Naive thymus-derived CD4-positive, alpha-beta T cell (primary cell): ENCODE measurements at regions of chr15 and their contacts with region 1.

Region 1: DNA sequence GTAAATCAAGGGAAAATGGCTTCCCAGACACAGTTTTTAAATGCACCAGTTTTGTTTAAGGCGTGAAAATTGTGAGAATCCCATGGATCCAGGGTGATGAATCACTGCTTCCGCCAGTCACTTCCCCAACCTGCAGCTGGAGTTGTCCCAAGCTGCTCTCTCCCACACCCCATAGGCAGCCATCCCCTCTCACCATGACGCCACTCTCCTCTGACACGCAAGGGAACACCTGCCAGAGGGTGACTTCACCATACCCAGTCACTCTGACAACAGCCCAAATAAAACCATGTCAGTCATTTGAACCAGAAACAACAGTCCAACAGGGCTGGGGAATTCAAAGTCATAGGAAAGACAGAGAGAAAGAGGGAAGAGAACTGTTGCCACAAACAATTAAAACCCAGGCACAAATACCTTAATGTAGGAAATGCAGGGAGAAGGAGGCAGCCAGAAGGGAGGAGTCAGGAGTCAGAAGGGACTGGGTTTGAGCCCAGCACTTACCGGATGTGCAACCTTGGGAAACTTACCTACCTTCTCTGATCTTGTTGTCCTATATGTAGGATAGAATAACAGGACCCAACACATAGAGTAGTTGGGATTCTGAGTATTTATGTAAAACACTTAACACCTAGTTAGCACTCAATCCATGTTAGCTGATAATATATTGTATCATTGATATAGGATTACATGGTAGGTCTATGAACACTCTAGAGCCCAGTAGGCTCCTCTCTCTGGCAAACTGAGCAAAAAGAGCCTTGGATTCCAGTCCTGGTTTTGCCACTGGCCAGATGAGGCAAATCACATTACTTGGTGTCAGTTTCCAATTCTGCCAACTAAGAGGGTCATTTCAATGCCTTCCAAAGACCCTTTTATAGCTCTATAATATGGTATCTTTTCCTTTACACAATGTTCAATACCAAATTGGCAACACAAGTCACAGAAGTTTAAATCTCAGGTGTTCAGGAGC is 326.3 kb upstream of the ICE2 start:
- DNase-seq: no peak
- ATAC-seq: no peak
- H3K4me3 ChIP-seq: no peak overlapping the region
- H3K4me3 Mint-ChIP-seq: peak overlapping the region in 1 of 10 donors; percentile 61
- H3K27ac ChIP-seq: no peak overlapping the region
- H3K27ac Mint-ChIP-seq: peak overlapping the region in 7 of 9 donors; percentile 32 to 85 (median 62)
- H3K4me1 ChIP-seq: peaks cover 27 to 34% of the 10 kb centered on the region in 2 donors
- H3K4me1 Mint-ChIP-seq: peaks cover 27 to 77% (median 64%) of the 10 kb centered on the region in 7 donors
- H3K27me3 ChIP-seq: no peaks in the 10 kb centered on the region
- H3K27me3 Mint-ChIP-seq: peaks cover 0 to 2% (median 0%) of the 10 kb centered on the region in 5 donors

Region 2: DNA sequence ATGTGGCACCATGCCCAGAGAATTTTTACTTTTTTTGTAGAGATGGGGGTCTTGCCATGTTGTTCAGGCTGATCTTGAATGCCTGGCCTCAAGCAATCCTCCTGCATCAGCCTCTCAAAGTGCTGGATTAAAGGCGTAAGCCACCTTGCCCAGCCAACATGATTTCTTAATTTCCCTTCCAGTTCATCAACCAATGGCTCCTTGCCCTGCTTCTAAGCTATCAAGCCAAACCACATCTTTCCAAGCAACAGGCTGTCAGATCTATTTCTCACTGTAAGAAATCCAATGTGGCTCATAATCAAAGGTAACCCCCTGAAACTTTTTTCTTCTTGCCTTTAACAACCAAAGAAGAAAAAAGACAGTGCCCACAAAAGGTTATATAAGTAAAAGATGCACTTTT is 122.1 kb before region 1 on chr15:
- CTCF ChIA-PET with region 1: no interaction called
- POLR2A ChIA-PET with region 1: no interaction called
- intact Hi-C with region 1: no loop called
- DNase-seq: no peak
- ATAC-seq: no peak
- H3K4me3 ChIP-seq: no peak overlapping the region
- H3K4me3 Mint-ChIP-seq: no peak overlapping the region
- H3K27ac ChIP-seq: no peak overlapping the region
- H3K27ac Mint-ChIP-seq: no peak overlapping the region
- H3K4me1 ChIP-seq: no peaks in the 10 kb centered on the region
- H3K4me1 Mint-ChIP-seq: no peaks in the 10 kb centered on the region
- H3K27me3 ChIP-seq: no peaks in the 10 kb centered on the region
- H3K27me3 Mint-ChIP-seq: no peaks in the 10 kb centered on the region

Region 3: GRCh38 chr15:60899322-60899966 is 94.2 kb after region 1 on chr15:
- CTCF ChIA-PET with region 1: no interaction called
- POLR2A ChIA-PET with region 1: no interaction called
- intact Hi-C with region 1: loop called in 1 of 2 experiments (anchors 5 kb)
- DNase-seq: peak in 2 of 9 donors; percentile 1 to 36
- ATAC-seq: peak; percentile 81
- H3K4me3 ChIP-seq: no peak overlapping the region
- H3K4me3 Mint-ChIP-seq: peak overlapping the region in 1 of 10 donors; percentile 63
- H3K27ac ChIP-seq: no peak overlapping the region
- H3K27ac Mint-ChIP-seq: peak overlapping the region in 1 of 9 donors; percentile 59
- H3K4me1 ChIP-seq: no peaks in the 10 kb centered on the region
- H3K4me1 Mint-ChIP-seq: peaks cover 0 to 50% (median 0%) of the 10 kb centered on the region in 7 donors
- H3K27me3 ChIP-seq: no peaks in the 10 kb centered on the region
- H3K27me3 Mint-ChIP-seq: peaks cover 0 to 11% (median 0%) of the 10 kb centered on the region in 5 donors

Region 4: GRCh38 chr15:61175024-61175423 is 369.8 kb after region 1 on chr15:
- CTCF ChIA-PET with region 1: no interaction called
- POLR2A ChIA-PET with region 1: no interaction called
- intact Hi-C with region 1: no loop called
- DNase-seq: no peak
- ATAC-seq: no peak
- H3K4me3 ChIP-seq: no peak overlapping the region
- H3K4me3 Mint-ChIP-seq: no peak overlapping the region
- H3K27ac ChIP-seq: no peak overlapping the region
- H3K27ac Mint-ChIP-seq: no peak overlapping the region
- H3K4me1 ChIP-seq: peaks cover 1 to 3% of the 10 kb centered on the region in 2 donors
- H3K4me1 Mint-ChIP-seq: peaks cover 2 to 18% (median 5%) of the 10 kb centered on the region in 7 donors
- H3K27me3 ChIP-seq: peaks cover 0 to 4% of the 10 kb centered on the region in 2 donors
- H3K27me3 Mint-ChIP-seq: peaks cover 29 to 49% (median 40%) of the 10 kb centered on the region in 5 donors